Left ventricle myocardium superior (tissue), 1 donor: ENCODE measurements at regions of chr1 and their contacts with region 1.

Region 1: GRCh38 chr1:24199289-24199900 is 12.3 kb upstream of the IFNLR1 start:
- DNase-seq: peak; percentile 45
- ATAC-seq: peak; percentile 79

Region 2: GRCh38 chr1:24119859-24120756 is 79.3 kb before region 1 on chr1:
- intact Hi-C with region 1: no loop called
- DNase-seq: peak; percentile 72
- ATAC-seq: peak; percentile 86

Region 3: DNA sequence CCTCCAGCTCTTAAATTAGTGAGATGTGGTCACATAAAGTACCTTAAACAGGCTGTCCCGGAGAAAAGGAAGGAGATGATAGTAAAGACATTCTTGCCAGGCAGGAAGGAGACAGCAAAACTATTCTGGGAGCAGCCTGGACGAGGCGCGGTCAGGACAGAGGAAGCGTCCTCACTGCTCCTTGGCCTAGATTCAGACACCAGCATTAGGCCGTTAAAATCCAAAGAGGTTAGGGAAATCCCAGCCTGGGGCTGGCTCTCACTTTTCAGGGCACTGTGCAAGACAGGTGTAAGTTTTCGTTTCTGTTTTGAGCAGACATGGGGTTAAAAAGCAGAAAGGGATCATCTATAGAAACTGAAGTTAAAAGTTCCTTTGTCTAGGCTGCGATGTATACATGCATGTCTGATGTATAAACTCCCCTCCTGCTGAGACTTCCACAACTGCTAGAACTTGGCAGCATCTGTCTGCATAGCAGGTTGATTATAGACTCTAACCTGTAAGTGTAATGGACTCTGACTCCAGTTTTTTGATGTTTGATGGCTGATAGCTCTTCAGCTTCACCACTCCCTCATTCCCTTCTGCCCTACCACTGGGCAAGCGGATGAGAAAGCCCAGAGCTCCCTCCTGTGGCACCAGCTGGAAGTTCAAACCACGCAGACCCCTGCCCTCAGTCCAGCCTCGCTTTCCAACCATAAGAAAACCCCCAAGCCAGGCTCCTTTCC is 192.6 kb after region 1 on chr1:
- intact Hi-C with region 1: loop called (anchors 2 kb)
- DNase-seq: peak; percentile 58
- ATAC-seq: peak; percentile 88